ENCODE measurements at regions of chr7 and their contacts with region 1.

Region 1: DNA sequence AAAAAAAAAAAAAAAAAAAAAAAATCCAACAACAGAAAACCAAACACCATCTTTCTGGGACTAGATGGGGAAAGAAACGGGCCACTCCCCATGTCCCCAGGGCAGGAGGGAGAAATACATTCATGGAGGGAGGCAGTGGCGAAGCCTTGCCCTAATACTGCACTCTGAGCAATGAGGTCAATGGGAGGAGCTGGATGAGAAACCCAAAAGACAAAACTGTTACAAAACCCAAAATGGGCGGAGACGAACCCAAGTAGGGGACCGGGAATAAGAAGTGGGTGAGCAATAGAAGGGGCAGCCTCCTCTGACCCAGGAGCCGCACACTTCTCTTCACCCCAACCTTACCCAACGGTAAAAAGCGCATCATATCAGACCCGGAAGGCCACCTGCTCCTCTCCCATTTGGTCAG is 6.6 kb downstream of the GNB2 start:
- DNase-seq: peak; percentile 58 to 70
- H3K4me3 ChIP-seq: no peak overlapping the region
- H3K27ac ChIP-seq: peak overlapping the region; percentile 47 to 56
- H3K4me1 ChIP-seq: no peaks in the 10 kb centered on the region
- H3K27me3 ChIP-seq: no peaks in the 10 kb centered on the region
- CTCF ChIP-seq: no peak
- POLR2A ChIP-seq: no peak

Region 2: DNA sequence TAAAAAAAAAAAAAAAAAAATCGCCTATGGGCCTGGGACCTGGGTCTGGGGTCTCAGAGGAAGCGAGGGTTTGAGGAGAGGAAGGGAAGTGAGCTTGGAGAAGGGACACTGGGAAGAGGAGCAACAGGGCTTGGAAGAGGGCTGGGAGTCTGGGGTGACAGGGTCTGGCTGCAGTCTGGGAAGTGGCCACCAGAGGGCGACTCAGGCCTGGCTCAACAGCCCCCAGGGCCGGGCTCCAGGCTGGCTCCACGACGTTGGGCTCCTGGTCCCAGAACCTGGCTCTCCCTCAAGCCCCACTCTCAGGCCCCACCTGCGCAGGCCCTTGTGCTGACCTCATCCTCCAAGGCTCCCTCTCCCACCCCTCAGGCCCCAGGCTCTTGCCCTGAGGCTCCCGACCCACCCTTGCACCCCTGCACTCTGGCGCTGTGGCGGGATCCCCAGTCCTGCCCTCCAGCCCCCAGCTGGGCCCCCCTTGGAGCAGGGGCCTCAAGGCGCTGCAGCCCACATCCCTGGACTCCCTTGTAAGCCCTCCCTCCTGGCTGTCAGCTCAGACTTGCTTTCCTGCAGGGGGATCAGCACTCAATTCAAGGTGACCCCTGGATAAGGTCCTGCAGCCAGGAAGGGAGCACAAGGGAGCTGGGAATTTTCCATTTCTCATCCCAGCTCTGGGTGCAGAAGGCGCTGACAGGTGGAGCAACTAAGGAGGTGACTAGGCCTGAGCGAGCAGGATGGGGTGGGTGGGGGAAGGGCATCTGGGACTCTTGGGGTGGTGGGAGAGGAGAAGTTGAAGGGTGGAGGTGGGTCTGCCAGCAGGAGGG is 210.7 kb before region 1 on chr7:
- intact Hi-C with region 1: loop called (anchors 10 kb)
- DNase-seq: peak; percentile 89 to 90
- H3K4me3 ChIP-seq: no peak overlapping the region
- H3K27ac ChIP-seq: peak overlapping the region; percentile 47 to 68
- H3K4me1 ChIP-seq: peaks cover 10 to 22% of the 10 kb centered on the region in 2 donors
- H3K27me3 ChIP-seq: no peaks in the 10 kb centered on the region
- CTCF ChIP-seq: peak; percentile 89 to 97 (median 96)
- POLR2A ChIP-seq: no peak

Region 3: DNA sequence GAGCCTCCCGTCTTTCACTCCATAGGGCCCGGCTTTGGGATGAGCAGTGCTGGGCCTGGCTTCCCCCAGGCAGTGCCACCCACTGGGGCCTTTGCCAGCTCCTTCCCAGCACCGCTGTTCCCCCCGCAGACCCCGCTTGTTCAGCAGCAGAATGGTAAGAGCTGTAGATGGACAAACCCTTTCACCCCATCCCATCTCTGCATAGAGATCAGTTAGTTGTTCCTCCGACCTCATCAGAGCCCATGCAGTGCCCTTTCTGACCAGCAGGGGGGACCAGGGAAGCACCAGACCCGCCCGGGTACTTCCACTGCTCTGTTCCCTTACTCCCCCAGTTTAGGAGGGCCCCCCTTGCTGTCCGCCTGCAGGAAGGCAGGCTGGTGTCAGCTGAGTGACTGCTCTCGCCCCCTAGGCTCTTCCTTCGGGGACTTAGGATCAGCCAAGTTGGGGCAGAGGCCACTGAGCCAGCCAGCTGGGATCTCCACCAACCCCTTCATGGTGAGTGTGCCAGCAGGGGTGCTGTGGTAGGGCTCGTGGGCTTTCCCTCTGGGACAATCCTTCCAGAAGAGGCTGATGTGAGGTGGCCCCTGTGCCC is 116.3 kb before region 1 on chr7:
- intact Hi-C with region 1: loop called (anchors 10 kb)
- DNase-seq: peak; percentile 83 to 84
- H3K4me3 ChIP-seq: no peak overlapping the region
- H3K27ac ChIP-seq: peak overlapping the region in 1 of 2 donors; percentile 21
- H3K4me1 ChIP-seq: no peaks in the 10 kb centered on the region
- H3K27me3 ChIP-seq: no peaks in the 10 kb centered on the region
- CTCF ChIP-seq: peak; percentile 84 to 94 (median 88)
- POLR2A ChIP-seq: no peak

Region 4: DNA sequence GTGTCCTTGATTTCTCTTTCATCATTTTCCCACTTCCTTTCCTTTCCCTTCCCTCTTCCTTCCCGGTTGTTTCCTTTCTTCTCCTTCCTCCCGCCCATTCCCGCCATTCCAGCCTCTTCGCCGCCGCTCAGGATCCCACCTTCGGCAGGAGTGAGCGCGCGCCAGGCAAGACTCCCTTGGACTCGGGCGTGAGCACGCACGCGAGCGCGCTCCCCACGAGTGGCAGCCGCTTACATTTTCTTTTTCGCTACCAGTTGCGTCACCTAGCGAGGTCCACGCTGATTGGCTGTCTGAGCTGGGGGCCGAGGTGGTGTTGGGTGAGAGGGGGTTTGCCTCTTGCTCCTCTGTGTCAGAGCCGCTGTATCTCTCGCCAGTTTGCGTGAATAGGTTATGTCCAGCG is 65.0 kb after region 1 on chr7:
- intact Hi-C with region 1: no loop called
- DNase-seq: peak; percentile 61 to 67
- H3K4me3 ChIP-seq: peak overlapping the region; percentile 6 to 17
- H3K27ac ChIP-seq: no peak overlapping the region
- H3K4me1 ChIP-seq: no peaks in the 10 kb centered on the region
- H3K27me3 ChIP-seq: no peaks in the 10 kb centered on the region
- CTCF ChIP-seq: no peak
- POLR2A ChIP-seq: no peak

Region 5: DNA sequence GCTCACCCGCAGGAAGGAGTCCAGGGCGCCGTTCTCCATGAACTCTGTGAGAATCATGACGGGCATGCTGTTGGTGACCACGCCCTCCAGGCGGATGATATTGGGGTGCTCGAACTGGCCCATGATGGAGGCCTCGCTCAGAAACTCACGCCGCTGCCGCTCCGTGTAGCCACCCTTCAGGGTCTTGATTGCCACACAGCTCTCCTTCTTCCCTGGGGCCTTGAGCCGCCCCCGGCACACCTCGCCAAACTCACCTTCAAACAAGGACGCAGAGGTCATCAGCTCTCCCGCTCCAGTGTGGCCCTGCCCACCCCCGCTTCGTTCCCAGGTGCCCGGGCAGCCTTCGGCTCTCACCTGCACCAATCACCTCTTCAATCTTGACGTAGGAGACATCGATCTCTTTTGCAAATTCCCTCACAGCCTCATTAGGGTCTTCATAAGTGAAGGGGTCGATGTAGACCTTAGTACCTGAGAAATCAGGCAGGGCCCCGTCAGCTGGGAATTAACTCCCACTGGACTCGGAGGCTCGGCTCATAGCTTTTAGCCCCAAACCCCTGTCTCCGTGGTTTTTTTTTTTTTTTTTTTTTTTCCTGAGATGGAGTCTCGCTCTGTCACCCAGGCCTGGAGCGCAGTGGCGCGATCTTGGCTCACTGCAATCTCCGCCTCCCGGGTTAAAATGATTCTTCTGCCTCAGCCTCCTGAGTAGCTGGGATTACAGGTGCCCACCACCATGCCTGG is 132.7 kb after region 1 on chr7:
- intact Hi-C with region 1: no loop called
- DNase-seq: no peak
- H3K4me3 ChIP-seq: no peak overlapping the region
- H3K27ac ChIP-seq: no peak overlapping the region
- H3K4me1 ChIP-seq: no peaks in the 10 kb centered on the region
- H3K27me3 ChIP-seq: no peaks in the 10 kb centered on the region
- CTCF ChIP-seq: no peak
- POLR2A ChIP-seq: no peak

Measured in uterus (tissue), 4 donors.